ENCODE measurements at regions of chr14 and their contacts with region 1.

Region 1: GRCh38 chr14:61252369-61253063 is 28.6 kb downstream of the TMEM30B start:
- DNase-seq: peak; percentile 72
- ATAC-seq: peak; percentile 99
- H3K4me3 ChIP-seq: no peak overlapping the region
- H3K27ac ChIP-seq: no peak overlapping the region
- H3K4me1 ChIP-seq: peaks cover 0 to 5% of the 10 kb centered on the region in 2 experiments; a peak in 2 of 4 replicates
- H3K27me3 ChIP-seq: no peaks in the 10 kb centered on the region
- CTCF ChIP-seq: peak; percentile 83 to 94 (median 92); a peak in 5 of 6 replicates
- POLR2A ChIP-seq: no peak
- RAD21 ChIP-seq: peak; percentile 97

Region 2: GRCh38 chr14:60331201-60332045 is 921.1 kb before region 1 on chr14:
- CTCF ChIA-PET with region 1: no interaction called
- POLR2A ChIA-PET with region 1: no interaction called
- RAD21 ChIA-PET with region 1: no interaction called
- intact Hi-C with region 1: loop called (anchors 5 kb)
- DNase-seq: peak; percentile 67
- ATAC-seq: peak; percentile 86
- H3K4me3 ChIP-seq: peak overlapping the region; percentile 47 to 55
- H3K27ac ChIP-seq: peak overlapping the region; percentile 56
- H3K4me1 ChIP-seq: peaks cover 3 to 11% of the 10 kb centered on the region in 2 experiments; a peak in 2 of 4 replicates
- H3K27me3 ChIP-seq: no peaks in the 10 kb centered on the region
- CTCF ChIP-seq: peak; percentile 69 to 91 (median 80); a peak in 5 of 6 replicates
- POLR2A ChIP-seq: no peak
- RAD21 ChIP-seq: peak; percentile 63

Region 3: GRCh38 chr14:60561845-60562746 is 690.4 kb before region 1 on chr14:
- CTCF ChIA-PET with region 1: interaction called, 5 read pairs
- POLR2A ChIA-PET with region 1: no interaction called
- RAD21 ChIA-PET with region 1: no interaction called
- intact Hi-C with region 1: loop called (anchors 1 kb)
- DNase-seq: peak; percentile 81
- ATAC-seq: peak; percentile 97
- H3K4me3 ChIP-seq: no peak overlapping the region
- H3K27ac ChIP-seq: no peak overlapping the region
- H3K4me1 ChIP-seq: peaks cover 0 to 4% of the 10 kb centered on the region in 2 experiments; a peak in 1 of 4 replicates
- H3K27me3 ChIP-seq: no peaks in the 10 kb centered on the region
- CTCF ChIP-seq: peak; percentile 80 to 96 (median 89)
- POLR2A ChIP-seq: no peak
- RAD21 ChIP-seq: peak; percentile 91

Region 4: DNA sequence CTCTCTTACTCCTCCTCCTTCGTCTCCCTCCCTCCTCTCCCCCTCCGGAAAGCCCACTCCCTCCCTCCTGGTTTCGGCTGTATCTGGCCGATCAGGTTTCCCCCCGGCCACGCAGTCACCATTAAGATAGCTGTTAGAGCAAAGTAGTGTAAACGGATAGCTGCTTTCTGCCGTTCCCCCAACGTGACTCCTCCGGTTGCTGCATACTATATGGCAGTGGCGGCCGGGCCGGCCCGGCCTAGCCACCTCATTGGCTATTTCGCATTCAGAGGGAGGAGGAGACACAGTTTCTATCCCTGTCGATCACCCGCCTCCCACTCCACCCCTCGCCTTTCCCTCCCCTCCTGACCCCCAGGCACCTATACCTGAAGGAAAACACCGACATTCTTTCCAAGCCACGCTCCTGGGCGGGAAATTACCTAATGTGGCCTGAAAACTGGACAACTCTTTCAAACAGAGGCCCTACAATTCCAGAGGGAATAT is 528.3 kb before region 1 on chr14 and contains the start of gene SIX4:
- CTCF ChIA-PET with region 1: no interaction called
- POLR2A ChIA-PET with region 1: no interaction called
- RAD21 ChIA-PET with region 1: no interaction called
- intact Hi-C with region 1: loop called (anchors 5 kb)
- DNase-seq: peak; percentile 78
- ATAC-seq: peak; percentile 82
- H3K4me3 ChIP-seq: peak within 1 kb of the TSS; percentile 77 to 79
- H3K27ac ChIP-seq: peak within 1 kb of the TSS; percentile 88
- H3K4me1 ChIP-seq: peaks cover 17 to 18% of the 10 kb centered on the region in 2 experiments
- H3K27me3 ChIP-seq: no peaks in the 10 kb centered on the region
- CTCF ChIP-seq: no peak
- POLR2A ChIP-seq: peak; percentile 94
- RAD21 ChIP-seq: no peak
- total RNA-seq, gene SIX4: 24.5 TPM

Measured in HCT116 (cell line).